ENCODE measurements at regions of chr2 and their contacts with region 1.

Region 1: DNA sequence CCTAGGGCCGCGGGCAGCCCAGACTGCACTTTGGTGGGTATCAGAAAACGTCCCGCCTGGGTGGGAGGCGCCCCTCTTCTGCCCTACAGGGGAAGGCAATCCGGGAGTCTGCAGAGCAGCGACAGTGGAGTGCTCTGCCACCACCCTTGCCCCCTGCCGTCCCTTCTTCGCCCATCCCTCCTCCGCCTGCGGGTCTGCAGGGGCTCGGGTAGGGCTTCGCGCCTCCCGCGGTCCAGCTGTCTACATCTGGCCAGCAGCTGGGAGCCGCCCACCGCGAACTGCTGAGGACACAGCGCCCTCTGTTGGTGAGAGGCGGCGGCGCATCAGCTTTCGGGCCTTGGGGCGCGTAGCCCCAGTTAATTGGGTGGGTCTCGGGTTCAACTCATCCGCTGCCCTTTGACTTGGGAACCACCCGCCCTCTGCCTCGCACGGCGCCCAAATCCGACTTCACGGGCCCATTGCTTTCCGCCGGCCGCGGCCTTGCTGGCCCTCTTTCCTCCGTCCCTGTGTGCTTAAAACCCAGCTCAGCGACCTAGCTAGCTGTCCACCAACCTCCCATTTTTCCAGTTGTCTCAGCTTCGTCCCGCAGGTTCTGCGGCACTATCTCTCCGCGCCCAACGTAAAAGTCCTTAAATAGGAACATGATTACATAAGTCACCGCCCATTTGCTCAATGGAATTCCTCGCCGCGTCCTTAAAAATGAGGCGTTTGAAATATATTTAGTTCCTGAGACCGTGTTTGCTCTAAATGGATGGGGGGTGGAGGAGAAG is 17.6 kb downstream of the WNT10A start:
- DNase-seq: peak; percentile 84
- ATAC-seq: peak; percentile 30
- H3K4me3 Mint-ChIP-seq: peak overlapping the region; percentile 45
- H3K27ac Mint-ChIP-seq: no peak overlapping the region
- H3K4me1 Mint-ChIP-seq: peaks cover 42% of the 10 kb centered on the region
- H3K27me3 Mint-ChIP-seq: peaks cover 54% of the 10 kb centered on the region

Region 2: GRCh38 chr2:218733171-218734021 is 164.9 kb before region 1 on chr2:
- CTCF ChIA-PET with region 1: no interaction called
- POLR2A ChIA-PET with region 1: no interaction called
- DNase-seq: peak; percentile 29
- ATAC-seq: peak; percentile 53
- H3K4me3 Mint-ChIP-seq: no peak overlapping the region
- H3K27ac Mint-ChIP-seq: peak overlapping the region; percentile 26
- H3K4me1 Mint-ChIP-seq: peaks cover 15% of the 10 kb centered on the region
- H3K27me3 Mint-ChIP-seq: no peaks in the 10 kb centered on the region

Region 3: GRCh38 chr2:218839888-218840287 is 58.4 kb before region 1 on chr2:
- CTCF ChIA-PET with region 1: no interaction called
- POLR2A ChIA-PET with region 1: no interaction called
- DNase-seq: no peak
- ATAC-seq: no peak
- H3K4me3 Mint-ChIP-seq: no peak overlapping the region
- H3K27ac Mint-ChIP-seq: no peak overlapping the region
- H3K4me1 Mint-ChIP-seq: no peaks in the 10 kb centered on the region
- H3K27me3 Mint-ChIP-seq: peaks cover 31% of the 10 kb centered on the region

Region 4: GRCh38 chr2:218860950-218861381 is 37.3 kb before region 1 on chr2:
- CTCF ChIA-PET with region 1: interaction called, 26 read pairs
- POLR2A ChIA-PET with region 1: no interaction called
- DNase-seq: no peak
- ATAC-seq: peak; percentile 35
- H3K4me3 Mint-ChIP-seq: no peak overlapping the region
- H3K27ac Mint-ChIP-seq: no peak overlapping the region
- H3K4me1 Mint-ChIP-seq: peaks cover 14% of the 10 kb centered on the region
- H3K27me3 Mint-ChIP-seq: peaks cover 67% of the 10 kb centered on the region

Region 5: DNA sequence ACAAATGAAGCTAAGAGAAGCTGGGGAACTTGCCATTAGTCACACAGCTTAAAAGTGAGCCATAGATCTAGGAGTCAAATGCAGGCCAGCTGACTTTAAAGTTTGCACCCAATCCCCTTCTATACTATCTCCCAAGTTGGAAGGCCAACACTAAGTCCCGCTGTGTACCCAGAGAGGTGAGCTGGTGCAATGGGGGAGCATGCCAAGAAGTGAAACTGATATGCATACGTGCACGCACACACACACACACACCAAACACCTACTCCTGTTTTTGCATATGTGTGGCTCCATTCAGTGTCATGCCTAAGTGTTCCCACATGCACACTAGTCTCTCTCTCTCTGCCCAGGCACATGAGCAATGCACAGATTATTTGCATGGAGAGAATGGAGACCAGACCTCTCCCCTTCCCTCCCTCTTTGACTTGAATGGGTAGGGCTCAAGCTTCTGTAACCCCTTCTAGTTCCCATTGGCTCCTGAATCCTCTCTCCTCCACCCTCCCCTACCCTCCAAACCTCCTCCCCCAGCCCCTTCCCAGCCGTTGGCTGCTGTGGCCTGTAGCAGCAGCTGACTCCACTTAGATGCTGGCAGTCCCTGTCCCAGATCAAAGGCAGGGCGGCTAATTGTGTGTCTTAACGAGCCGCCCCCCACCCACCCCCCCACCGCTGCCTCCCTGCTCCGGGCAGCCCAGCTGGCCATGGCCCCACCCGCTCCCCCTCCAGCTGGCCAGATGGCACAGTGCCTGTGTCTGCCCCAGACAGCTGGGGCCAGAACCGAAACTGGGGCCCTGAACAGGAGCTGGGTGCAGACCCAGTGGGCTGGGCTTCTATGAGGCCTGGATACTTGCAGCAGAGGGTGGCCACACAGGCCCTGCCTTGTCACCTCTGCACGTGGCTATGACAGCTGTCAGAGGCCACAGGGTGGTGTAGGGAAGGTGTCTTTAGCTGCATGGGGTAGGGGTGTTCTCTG is 12.0 kb before region 1 on chr2:
- CTCF ChIA-PET with region 1: interaction called, 930 read pairs
- POLR2A ChIA-PET with region 1: interaction called, 31 read pairs
- DNase-seq: no peak
- ATAC-seq: no peak
- H3K4me3 Mint-ChIP-seq: no peak overlapping the region
- H3K27ac Mint-ChIP-seq: no peak overlapping the region
- H3K4me1 Mint-ChIP-seq: peaks cover 3% of the 10 kb centered on the region
- H3K27me3 Mint-ChIP-seq: peaks cover 62% of the 10 kb centered on the region

Region 6: DNA sequence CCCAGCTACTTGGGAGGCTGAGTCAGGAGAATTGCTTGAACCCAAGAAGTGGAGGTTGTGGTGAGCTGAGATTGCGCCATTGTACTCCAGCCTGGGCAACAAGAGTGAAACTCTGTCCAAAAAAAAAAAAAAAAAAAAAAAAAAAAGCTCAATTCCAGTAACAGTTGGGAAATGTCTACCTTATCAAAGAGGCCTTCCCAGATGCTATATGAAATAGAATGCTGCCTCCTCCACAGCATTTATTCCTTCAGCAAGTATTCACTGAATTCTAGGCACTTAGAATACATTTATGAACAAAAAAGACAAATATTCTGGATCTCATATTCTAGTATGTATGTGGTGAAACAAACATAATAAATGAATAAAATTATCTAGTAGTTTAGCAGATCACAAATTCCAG is 48.3 kb after region 1 on chr2:
- CTCF ChIA-PET with region 1: no interaction called
- POLR2A ChIA-PET with region 1: no interaction called
- DNase-seq: no peak
- ATAC-seq: no peak
- H3K4me3 Mint-ChIP-seq: no peak overlapping the region
- H3K27ac Mint-ChIP-seq: no peak overlapping the region
- H3K4me1 Mint-ChIP-seq: no peaks in the 10 kb centered on the region
- H3K27me3 Mint-ChIP-seq: peaks cover 33% of the 10 kb centered on the region

Region 7: GRCh38 chr2:218979846-218980734 is 81.8 kb after region 1 on chr2:
- CTCF ChIA-PET with region 1: interaction called, 36 read pairs
- POLR2A ChIA-PET with region 1: no interaction called
- DNase-seq: peak; percentile 87
- ATAC-seq: peak; percentile 92
- H3K4me3 Mint-ChIP-seq: no peak overlapping the region
- H3K27ac Mint-ChIP-seq: no peak overlapping the region
- H3K4me1 Mint-ChIP-seq: peaks cover 26% of the 10 kb centered on the region
- H3K27me3 Mint-ChIP-seq: peaks cover 64% of the 10 kb centered on the region